ENCODE measurements at regions of chr2 and their contacts with region 1.

Region 1: GRCh38 chr2:158745044-158745865 is 49.9 kb upstream of the DAPL1 start:
- ATAC-seq: peak; percentile 64 to 91 (median 89)
- H3K4me3 ChIP-seq: peak overlapping the region in 1 of 5 donors; percentile 11
- H3K27ac ChIP-seq: no peak overlapping the region
- H3K4me1 ChIP-seq: peaks cover under 1 to 5% of the 10 kb centered on the region in 2 donors

Region 2: GRCh38 chr2:158179660-158180059 is 565.6 kb before region 1 on chr2:
- in situ Hi-C with region 1: loop called in 1 of 9 experiments (anchors 25 kb)
- ATAC-seq: peak in 1 of 8 experiments; percentile 78
- H3K4me3 ChIP-seq: no peak overlapping the region
- H3K27ac ChIP-seq: no peak overlapping the region
- H3K4me1 ChIP-seq: no peaks in the 10 kb centered on the region

Region 3: DNA sequence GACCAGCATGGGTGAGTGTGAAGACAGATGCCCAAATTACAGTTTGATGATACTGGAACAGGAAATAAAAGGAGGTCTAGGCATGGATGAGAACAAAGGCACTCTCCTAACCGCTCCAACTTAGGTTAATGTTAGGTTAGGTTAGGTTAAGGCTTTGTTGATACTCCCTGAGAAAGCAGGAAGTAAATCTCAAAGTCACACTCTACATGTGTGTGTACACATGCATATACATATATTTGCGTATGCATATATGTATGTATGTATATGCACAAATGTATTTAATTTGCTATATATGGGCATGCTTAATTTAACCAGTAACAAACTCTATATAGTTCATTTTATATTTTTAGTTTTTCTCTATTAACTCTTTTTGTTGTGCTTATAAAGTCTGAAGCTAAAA is 504.3 kb before region 1 on chr2:
- in situ Hi-C with region 1: no loop called
- ATAC-seq: peak in 3 of 8 experiments; percentile 51 to 98 (median 64)
- H3K4me3 ChIP-seq: no peak overlapping the region
- H3K27ac ChIP-seq: no peak overlapping the region
- H3K4me1 ChIP-seq: peaks cover 0 to 7% of the 10 kb centered on the region in 2 donors

Region 4: GRCh38 chr2:158456309-158457066 is 288.8 kb before region 1 on chr2 and contains the starts of genes CCDC148 and PKP4:
- in situ Hi-C with region 1: loop called in 1 of 9 experiments (anchors 25 kb)
- ATAC-seq: peak; percentile 76 to 89 (median 86)
- H3K4me3 ChIP-seq: peak within 1 kb of the TSS; percentile 67 to 89 (median 83)
- H3K27ac ChIP-seq: peak within 1 kb of the TSS; percentile 53 to 73
- H3K4me1 ChIP-seq: peaks cover 0 to 15% of the 10 kb centered on the region in 2 donors
- total RNA-seq, gene CCDC148: 0.45 to 7.0 (median 1.5) TPM
- total RNA-seq, gene PKP4: 17.8 to 43.0 (median 29.1) TPM

Measured in motor neuron (in vitro differentiated cells).